Uterus (tissue), 4 donors: ENCODE measurements at regions of chr1 and their contacts with region 1.

Region 1: GRCh38 chr1:30911046-30911954 is 2.7 kb upstream of the SDC3 start:
- DNase-seq: peak; percentile 87 to 92
- H3K4me3 ChIP-seq: no peak overlapping the region
- H3K27ac ChIP-seq: no peak overlapping the region
- H3K4me1 ChIP-seq: no peaks in the 10 kb centered on the region
- H3K27me3 ChIP-seq: no peaks in the 10 kb centered on the region
- CTCF ChIP-seq: peak; percentile 88 to 98 (median 91)
- POLR2A ChIP-seq: no peak

Region 2: GRCh38 chr1:30412241-30413110 is 498.8 kb before region 1 on chr1:
- intact Hi-C with region 1: no loop called
- DNase-seq: peak in 1 of 2 donors; percentile 5
- H3K4me3 ChIP-seq: no peak overlapping the region
- H3K27ac ChIP-seq: no peak overlapping the region
- H3K4me1 ChIP-seq: no peaks in the 10 kb centered on the region
- H3K27me3 ChIP-seq: no peaks in the 10 kb centered on the region
- CTCF ChIP-seq: no peak
- POLR2A ChIP-seq: no peak

Region 3: DNA sequence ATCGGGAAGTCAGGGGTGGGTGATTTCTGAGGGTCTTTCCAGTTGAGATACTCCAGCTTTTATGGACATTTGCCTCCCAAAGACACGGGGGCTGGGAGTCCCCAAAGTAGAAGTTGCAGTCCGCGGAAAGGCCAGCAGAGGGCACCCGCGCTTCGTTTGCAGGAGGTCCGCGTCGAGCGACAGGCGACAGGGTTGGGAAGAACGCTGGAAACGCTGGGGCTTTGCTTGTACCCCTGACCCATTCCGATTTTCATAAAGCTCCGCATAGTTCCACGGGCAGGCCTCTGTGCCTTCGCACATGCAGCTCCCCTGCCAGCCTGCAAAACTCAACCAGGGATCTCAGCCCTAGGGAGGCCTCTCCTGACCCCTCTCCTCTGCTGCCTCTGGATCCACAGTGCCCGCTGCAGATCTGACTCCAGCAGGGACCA is 109.5 kb before region 1 on chr1:
- intact Hi-C with region 1: loop called (anchors 2 kb)
- DNase-seq: peak; percentile 82 to 84
- H3K4me3 ChIP-seq: no peak overlapping the region
- H3K27ac ChIP-seq: no peak overlapping the region
- H3K4me1 ChIP-seq: no peaks in the 10 kb centered on the region
- H3K27me3 ChIP-seq: no peaks in the 10 kb centered on the region
- CTCF ChIP-seq: peak; percentile 95 to 98 (median 96)
- POLR2A ChIP-seq: no peak

Region 4: DNA sequence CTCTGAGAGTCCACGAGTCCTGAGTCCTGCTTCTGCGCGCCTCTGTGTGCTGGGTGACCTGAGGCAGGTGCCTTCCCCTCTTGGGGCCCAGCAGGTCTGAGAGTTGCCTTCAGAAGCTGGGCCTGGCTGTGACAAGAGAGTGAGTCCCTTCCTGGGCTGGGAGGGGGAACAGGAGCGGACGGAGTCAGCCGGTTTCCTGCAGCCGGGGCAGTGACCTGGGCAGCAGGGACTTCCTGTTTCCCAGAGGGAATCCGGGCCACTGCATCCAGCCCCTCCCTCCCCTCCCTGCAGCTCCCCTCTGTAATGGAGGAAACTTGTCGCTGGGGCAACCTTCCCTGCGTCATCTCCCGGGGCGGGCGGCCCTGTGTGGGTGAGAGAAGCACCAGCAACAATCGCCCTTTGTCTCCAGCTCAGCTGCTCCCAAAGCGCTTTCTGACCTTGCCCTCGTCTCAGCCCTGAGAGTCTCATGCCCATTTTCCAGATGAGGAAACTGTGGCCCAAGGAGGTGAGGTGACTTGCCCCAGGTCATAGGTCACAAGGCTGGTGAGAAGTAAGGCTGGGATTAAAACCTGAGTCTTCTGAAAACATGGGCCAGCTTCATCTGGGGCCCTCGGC is 63.8 kb before region 1 on chr1:
- intact Hi-C with region 1: no loop called
- DNase-seq: peak; percentile 46 to 76
- H3K4me3 ChIP-seq: no peak overlapping the region
- H3K27ac ChIP-seq: peak overlapping the region in 1 of 2 donors; percentile 46
- H3K4me1 ChIP-seq: no peaks in the 10 kb centered on the region
- H3K27me3 ChIP-seq: no peaks in the 10 kb centered on the region
- CTCF ChIP-seq: no peak
- POLR2A ChIP-seq: no peak